OCI-LY7 (cell line): ENCODE measurements at regions of chr11 and their contacts with region 1.

Region 1: DNA sequence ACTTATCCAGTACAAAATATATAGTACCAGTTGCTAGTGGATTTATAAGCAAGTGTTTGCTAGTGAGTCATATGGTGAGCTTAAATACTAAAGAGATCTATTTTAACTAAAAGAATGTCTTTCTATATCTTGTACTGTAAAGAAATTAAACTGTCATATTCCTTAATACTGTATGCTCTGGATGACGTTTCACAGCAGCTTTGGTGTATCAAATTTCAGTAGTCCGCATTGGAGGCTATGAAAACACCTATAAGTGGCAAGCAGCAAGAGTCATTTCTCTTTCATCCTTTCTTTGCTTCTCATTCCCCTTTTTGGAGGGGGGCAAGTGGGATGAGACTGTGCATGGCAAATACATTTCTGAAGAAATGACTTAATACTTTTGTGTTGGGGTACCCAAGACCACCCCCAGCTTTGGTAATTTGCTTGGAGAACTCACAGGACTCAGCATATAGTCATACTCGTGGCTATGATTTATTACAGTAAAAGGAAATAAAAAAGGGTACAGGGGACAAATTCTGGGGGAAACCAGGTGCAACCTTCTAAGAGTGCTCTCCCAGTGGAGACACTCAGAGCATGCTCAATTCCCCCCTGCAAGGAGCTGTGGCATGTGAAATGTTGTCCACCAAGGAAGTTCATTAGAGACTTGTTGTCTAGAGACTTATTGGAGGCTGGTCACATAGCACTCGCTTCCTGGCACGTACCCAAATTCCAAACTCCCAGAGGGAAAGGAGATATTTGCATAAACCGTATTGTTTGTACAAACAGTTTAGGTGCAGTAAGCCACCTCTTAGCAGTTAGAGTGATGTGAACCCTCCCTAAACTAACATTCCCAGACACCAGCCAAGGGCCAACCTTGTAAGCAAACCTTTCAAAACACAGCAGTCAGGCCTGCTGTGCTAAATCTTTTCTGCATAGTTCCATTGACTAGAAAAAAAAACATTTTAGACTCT is 210.8 kb downstream of the PGR start:
- DNase-seq: no peak
- H3K4me3 ChIP-seq: no peak overlapping the region
- H3K27ac ChIP-seq: no peak overlapping the region
- H3K4me1 ChIP-seq: no peaks in the 10 kb centered on the region
- CTCF ChIP-seq: no peak

Region 2: DNA sequence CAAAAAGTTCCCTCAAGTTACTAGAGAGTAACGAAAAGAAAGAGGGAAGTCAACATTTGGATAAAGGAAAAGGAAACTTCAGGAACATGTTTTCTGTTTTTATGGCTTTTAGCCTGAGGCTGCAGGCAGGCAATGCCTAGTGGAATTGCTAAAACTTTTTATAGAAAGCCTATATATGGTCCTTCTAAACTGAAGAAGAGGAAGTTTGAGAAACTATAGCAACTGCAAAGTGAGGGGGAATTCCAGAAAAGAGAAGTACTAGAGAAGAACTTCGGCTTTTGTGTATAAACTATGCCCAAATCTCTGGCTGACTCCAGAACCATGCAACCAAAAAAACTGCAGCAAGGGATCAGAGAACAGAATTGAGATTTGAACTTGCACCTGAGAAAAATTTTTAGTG is 306.1 kb before region 1 on chr11:
- CTCF ChIA-PET with region 1: no interaction called
- POLR2A ChIA-PET with region 1: no interaction called
- intact Hi-C with region 1: no loop called
- DNase-seq: no peak
- H3K4me3 ChIP-seq: no peak overlapping the region
- H3K27ac ChIP-seq: no peak overlapping the region
- H3K4me1 ChIP-seq: no peaks in the 10 kb centered on the region
- CTCF ChIP-seq: no peak

Region 3: GRCh38 chr11:100908746-100909145 is 10.1 kb before region 1 on chr11:
- CTCF ChIA-PET with region 1: interaction called, 3 read pairs
- POLR2A ChIA-PET with region 1: interaction called, 21 read pairs
- intact Hi-C with region 1: no loop called
- DNase-seq: no peak
- H3K4me3 ChIP-seq: no peak overlapping the region
- H3K27ac ChIP-seq: no peak overlapping the region
- H3K4me1 ChIP-seq: peaks cover 35% of the 10 kb centered on the region
- CTCF ChIP-seq: no peak

Region 4: DNA sequence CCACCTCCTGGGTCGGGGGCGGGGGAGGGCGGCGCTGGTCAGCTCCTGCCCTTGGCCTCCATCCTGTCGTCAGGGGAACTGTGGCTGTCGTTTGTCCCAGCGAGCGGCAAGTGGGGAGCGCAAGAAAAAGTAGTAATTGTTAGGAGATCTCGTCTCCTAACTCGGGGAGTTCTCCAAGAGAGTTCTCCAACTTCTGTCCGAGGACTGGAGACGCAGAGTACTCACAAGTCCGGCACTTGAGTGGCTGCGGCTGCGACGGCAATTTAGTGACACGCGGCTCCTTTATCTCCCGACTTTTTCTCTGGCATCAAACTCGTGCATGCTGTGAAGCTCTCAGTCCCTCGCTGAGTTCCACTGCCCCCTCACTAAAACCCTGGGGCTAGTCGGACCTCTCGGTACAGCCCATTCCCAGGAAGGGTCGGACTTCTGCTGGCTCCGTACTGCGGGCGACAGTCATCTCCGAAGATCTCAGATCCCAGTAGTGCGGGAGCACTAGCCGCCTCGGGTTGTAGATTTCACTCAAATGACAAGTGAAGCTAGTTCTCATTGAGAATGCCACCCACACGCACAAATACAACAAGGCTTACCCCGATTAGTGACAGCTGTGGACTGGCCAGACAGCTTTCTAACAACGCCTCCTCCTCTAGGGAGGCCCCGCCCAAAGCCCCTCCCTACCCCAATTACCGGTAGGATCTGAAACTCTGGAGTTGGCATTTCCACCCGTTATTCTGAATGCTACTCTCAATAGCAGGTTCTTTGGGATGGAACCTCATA is 210.6 kb after region 1 on chr11 and contains the start of gene PGR:
- CTCF ChIA-PET with region 1: no interaction called
- POLR2A ChIA-PET with region 1: no interaction called
- intact Hi-C with region 1: no loop called
- DNase-seq: no peak
- H3K4me3 ChIP-seq: no peak within 1 kb of the TSS
- H3K27ac ChIP-seq: no peak within 1 kb of the TSS
- H3K4me1 ChIP-seq: no peaks in the 10 kb centered on the region
- CTCF ChIP-seq: no peak
- total RNA-seq, gene PGR: not detected in 2 replicates